HEK293 (cell line): ENCODE measurements at regions of chr6 and their contacts with region 1.

Region 1: GRCh38 chr6:149431905-149432775 is 32.1 kb downstream of the SUMO4 start:
- H3K4me3 ChIP-seq: no peak overlapping the region
- H3K27ac ChIP-seq: no peak overlapping the region
- H3K4me1 ChIP-seq: no peaks in the 10 kb centered on the region
- CTCF ChIP-seq: peak; percentile 89

Region 2: DNA sequence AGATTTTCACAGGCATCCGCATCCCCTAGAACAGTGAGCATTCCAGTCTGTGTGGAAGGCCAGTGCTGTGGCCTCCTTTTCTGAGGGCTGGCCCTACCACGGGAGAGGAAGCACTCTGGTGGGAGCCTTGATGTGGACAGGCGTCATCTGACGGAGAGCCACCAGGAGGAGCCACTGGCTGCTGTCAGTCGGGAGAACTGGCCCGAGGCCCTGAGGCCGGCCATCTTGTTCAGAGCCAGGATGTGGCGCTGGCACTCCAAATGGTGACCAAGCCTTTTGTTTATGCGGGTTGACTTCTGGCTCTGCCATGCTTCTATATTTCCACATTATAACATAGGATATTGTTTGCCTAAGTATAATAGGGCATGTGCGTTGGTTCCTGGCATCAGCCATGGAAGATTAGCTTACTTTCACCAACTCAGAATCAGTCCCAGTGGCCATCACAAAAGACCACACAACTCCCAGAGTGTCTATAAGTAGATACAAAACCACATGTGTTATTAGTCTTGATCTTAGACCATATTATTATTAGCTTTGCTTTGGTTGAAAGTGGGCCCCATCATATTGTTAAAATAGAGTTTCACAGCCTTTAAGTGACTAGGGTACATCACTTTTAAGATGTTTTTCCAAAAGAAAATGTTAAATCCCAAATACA is 388.5 kb before region 1 on chr6:
- CTCF ChIA-PET with region 1: interaction called, 22 read pairs
- POLR2A ChIA-PET with region 1: no interaction called
- H3K4me3 ChIP-seq: no peak overlapping the region
- H3K27ac ChIP-seq: no peak overlapping the region
- H3K4me1 ChIP-seq: no peaks in the 10 kb centered on the region
- CTCF ChIP-seq: peak; percentile 21; the same call in 1 of the 2 replicates

Region 3: DNA sequence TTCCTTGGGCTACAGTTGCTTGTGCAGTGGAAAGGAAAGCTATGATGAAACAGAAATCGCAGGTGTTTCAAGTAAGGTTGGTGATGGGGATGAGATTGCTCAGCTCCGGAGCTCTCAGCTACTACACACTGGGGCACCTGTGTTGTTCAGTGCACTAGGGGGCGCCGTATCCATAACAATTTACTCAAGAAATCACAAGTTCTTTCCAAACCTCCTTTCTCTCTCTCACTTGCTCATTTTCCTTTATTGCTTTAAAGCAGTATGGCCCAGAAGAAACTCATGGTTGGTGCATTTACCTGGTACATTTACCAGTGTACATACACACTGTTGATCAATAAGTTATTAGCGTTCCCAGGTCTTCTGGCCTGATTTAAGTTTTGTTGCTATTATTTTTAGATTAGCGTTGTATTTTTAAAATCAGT is 349.8 kb before region 1 on chr6:
- CTCF ChIA-PET with region 1: interaction called, 80 read pairs
- POLR2A ChIA-PET with region 1: no interaction called
- H3K4me3 ChIP-seq: no peak overlapping the region
- H3K27ac ChIP-seq: no peak overlapping the region
- H3K4me1 ChIP-seq: peaks cover 11% of the 10 kb centered on the region
- CTCF ChIP-seq: peak; percentile 78

Region 4: GRCh38 chr6:149094156-149094555 is 338.0 kb before region 1 on chr6:
- CTCF ChIA-PET with region 1: interaction called, 17 read pairs
- POLR2A ChIA-PET with region 1: no interaction called
- H3K4me3 ChIP-seq: no peak overlapping the region
- H3K27ac ChIP-seq: no peak overlapping the region
- H3K4me1 ChIP-seq: peaks cover 2% of the 10 kb centered on the region; the same call in 1 of the 2 replicates
- CTCF ChIP-seq: no peak

Region 5: GRCh38 chr6:149323925-149324324 is 108.2 kb before region 1 on chr6:
- CTCF ChIA-PET with region 1: interaction called, 14 read pairs
- POLR2A ChIA-PET with region 1: no interaction called
- H3K4me3 ChIP-seq: no peak overlapping the region
- H3K27ac ChIP-seq: no peak overlapping the region
- H3K4me1 ChIP-seq: peaks cover 23% of the 10 kb centered on the region
- CTCF ChIP-seq: no peak

Region 6: DNA sequence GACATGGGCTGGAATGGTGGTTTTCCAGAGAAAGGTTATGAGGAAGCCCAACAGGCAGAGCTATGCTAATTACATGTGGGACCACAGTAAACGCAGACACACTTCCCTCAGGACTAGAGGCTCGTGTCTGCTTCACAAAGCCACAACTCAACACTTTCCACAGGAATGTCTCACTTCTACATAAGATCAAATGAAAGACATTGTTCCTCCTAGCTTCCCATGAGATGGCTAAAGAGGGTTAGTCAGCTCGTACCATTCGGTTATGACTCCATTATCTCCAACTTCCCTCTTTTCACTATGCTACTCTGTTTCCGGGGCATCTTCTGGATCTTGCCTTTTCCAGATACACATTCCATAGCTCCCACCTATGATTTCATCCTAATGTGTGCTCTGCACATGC is 81.8 kb after region 1 on chr6:
- CTCF ChIA-PET with region 1: interaction called, 36 read pairs
- POLR2A ChIA-PET with region 1: no interaction called
- H3K4me3 ChIP-seq: no peak overlapping the region
- H3K27ac ChIP-seq: no peak overlapping the region
- H3K4me1 ChIP-seq: no peaks in the 10 kb centered on the region
- CTCF ChIP-seq: no peak